Heart right ventricle (tissue), 16 donors: ENCODE measurements at regions of chr1 and their contacts with region 1.

Region 1: DNA sequence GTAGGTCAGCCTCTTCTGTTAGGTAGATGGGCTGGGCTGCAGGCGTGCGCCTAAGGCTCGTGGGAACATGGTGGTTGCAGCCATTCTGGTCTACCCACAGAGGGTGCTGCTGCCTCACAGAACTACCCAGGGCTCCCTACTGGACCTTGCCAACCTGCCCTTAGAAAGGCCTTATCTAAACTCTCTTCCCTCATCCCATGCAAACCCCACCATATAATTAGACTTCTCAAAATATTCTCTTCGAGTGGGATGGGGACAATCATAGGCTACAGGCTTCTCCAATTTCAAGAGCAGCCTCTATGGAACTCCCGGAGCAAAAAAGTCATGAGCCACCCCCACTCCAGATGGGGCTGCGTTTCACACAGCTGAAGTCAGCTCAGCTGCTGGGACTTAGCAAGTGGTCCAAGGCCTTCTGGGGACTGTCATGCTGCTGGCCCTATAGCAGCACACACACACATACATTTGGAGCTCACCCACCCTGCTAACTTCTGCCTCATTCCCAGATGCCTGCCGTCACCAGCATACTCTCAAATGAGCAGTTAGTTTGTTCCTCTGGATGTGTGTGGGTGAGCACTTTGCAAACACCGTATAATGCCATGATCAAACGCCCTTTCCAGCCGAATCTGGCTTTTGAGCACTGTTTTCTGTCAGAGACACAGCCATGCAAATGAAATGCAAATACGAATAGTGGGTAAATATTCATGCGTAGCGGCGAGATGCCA is 6.1 kb upstream of the SDHB start:
- DNase-seq: peak; percentile 43 to 53
- ATAC-seq: peak; percentile 59 to 88 (median 84)
- H3K4me3 ChIP-seq: no peak overlapping the region
- H3K27ac ChIP-seq: peak overlapping the region in 1 of 10 donors; percentile 72
- H3K4me1 ChIP-seq: peaks cover 0 to 48% (median 7%) of the 10 kb centered on the region in 9 donors
- H3K27me3 ChIP-seq: peaks cover 0 to 5% (median 0%) of the 10 kb centered on the region in 7 donors
- CTCF ChIP-seq: peak; percentile 41 to 73 (median 67)

Region 2: DNA sequence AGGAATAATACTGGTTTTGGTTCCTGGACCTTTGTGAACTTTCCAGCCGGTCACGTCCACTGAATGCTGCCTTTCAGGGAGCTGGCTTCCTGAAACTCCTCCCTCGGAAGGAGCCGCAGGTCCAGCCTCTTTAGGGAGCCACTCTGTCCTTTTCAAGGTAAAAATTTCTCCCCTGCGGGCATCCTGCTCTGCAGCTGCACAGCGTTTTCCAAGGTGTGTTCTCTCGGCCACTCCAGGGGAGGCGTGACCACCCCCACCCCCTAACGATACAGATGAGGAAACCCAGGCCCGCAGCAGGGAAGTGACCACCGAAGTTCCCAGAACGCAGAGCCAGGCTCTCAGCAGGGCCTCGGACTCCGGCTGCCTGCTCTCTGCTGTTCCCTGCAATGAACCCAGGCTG is 37.9 kb after region 1 on chr1:
- intact Hi-C with region 1: loop called in 1 of 10 experiments (anchors 2 kb)
- DNase-seq: no peak
- ATAC-seq: peak in 1 of 8 donors; percentile 34
- H3K4me3 ChIP-seq: no peak overlapping the region
- H3K27ac ChIP-seq: peak overlapping the region in 1 of 10 donors; percentile 75
- H3K4me1 ChIP-seq: peaks cover 0 to 16% (median 0%) of the 10 kb centered on the region in 9 donors
- H3K27me3 ChIP-seq: peaks cover 0 to 9% (median 0%) of the 10 kb centered on the region in 7 donors
- CTCF ChIP-seq: no peak

Region 3: DNA sequence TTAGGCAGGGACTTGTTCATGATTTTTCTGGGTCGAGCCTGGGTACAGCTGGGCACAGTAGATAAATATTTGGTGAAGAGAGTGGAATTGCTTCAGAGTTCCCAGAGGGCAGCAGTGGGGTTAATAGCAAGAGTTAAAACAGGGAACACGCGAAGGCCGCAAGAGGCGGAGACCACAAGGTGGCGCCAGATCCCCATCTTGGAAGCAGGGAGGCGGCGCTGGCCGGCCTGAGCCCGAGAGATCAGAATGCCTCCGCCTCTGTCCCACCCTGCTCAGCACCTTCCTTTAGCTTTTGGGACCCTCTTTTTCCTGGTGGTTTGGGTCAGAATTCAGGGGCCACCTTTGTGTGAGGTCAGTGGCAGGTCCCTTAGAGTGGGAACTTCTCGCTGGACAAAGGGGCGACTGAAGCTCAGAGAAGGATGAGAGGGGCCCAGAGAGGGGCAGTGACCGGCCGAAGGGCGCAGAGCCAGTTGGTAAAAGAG is 65.9 kb after region 1 on chr1:
- intact Hi-C with region 1: loop called in 1 of 10 experiments (anchors 10 kb)
- DNase-seq: peak; percentile 84 to 89
- ATAC-seq: peak; percentile 77 to 88 (median 83)
- H3K4me3 ChIP-seq: no peak overlapping the region
- H3K27ac ChIP-seq: no peak overlapping the region
- H3K4me1 ChIP-seq: peaks cover 0 to 43% (median 5%) of the 10 kb centered on the region in 9 donors
- H3K27me3 ChIP-seq: peaks cover 0 to 16% (median 2%) of the 10 kb centered on the region in 7 donors
- CTCF ChIP-seq: peak; percentile 85 to 98 (median 92)

Region 4: DNA sequence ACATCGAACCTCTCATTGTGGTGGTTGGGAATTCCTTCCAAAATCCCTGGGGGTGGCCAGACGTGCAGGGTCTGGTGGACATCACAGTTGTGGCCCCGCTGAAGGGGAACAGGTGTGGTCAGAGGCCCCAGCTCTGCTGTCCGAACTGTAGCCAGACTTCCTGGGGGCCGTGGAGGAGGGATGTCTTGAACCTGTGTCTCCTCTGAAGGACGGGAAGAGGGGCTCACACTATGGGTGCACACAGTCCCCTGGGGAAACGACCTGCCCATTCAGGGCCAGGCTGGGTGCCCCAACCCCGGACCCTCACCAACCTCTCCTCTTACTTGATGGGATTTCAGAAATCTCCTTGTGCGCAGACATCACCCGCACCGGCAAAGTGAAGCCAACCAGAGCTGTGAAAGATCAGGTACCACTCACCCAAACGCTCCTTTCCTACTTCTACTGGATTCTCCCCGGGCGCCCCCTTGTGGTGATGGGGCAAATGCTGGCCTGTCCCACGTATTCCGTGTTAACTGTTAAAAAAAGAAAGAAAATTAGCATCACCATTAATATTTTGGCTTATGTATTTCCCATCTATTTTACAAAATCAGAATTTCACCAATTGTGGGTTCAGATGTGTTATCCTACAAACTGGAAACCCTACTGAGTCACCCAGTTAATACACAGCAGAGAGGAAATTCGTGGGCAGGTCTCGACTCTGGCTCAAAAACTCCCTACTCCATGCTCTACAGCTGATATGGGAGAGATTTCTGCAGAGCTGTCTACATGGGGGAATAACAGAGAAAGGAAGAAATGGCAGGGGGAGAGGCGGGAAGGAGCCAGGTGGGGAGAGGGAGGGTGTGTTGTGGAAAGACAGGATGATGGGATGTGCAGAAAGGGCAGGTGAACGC is 276.2 kb after region 1 on chr1:
- intact Hi-C with region 1: loop called in 4 of 10 experiments (anchors 5 to 10 kb)
- DNase-seq: peak; percentile 40 to 46
- ATAC-seq: peak in 1 of 8 donors; percentile 51
- H3K4me3 ChIP-seq: no peak overlapping the region
- H3K27ac ChIP-seq: no peak overlapping the region
- H3K4me1 ChIP-seq: no peaks in the 10 kb centered on the region
- H3K27me3 ChIP-seq: peaks cover 0 to 46% (median 21%) of the 10 kb centered on the region in 7 donors
- CTCF ChIP-seq: peak; percentile 40 to 90 (median 68)

Region 5: DNA sequence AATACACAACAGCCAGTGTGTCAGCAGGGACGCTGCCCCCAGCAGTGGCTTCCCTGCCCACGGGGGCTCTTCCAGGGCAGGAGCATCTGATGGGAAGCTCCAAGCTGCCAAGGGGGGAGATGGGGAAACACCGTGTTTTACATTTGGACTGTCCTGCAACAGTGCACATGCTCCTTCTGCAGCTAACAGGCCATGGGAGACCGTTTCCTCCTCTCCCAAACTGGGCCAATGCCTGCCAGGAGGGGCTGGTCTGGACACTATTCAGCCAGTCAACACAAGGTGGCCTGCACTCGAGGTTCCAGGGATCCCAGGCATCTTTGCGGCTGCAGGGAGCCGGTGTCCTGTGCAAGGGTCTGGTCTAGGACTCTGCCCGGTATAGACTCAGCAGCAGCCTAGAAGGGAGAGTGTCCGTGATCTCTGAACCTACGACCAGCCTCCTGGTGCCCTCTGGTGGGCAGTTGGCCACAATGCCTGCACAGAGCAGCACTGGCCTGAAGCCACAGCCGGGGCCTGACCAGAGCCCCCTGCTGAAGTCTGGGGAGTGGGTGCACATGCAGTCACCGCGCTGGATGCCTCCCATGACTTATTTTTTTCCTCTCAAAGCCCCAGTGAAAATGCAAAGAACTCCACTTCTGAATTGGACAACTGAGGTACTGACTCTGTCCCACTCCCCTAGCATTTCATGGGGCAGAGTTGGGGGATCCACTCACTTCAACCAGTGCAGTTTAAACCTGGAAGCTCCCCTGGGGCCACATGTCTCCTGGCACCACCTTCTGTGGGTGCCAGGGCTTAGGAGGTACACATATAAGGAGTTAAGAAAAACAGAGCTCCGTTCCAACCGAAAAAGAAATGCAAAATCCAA is 346.2 kb after region 1 on chr1:
- intact Hi-C with region 1: loop called in 2 of 10 experiments (anchors 10 kb)
- DNase-seq: peak; percentile 39 to 50
- ATAC-seq: peak in 7 of 8 donors; percentile 82 to 90 (median 87)
- H3K4me3 ChIP-seq: no peak overlapping the region
- H3K27ac ChIP-seq: no peak overlapping the region
- H3K4me1 ChIP-seq: peaks cover 0 to 10% (median 0%) of the 10 kb centered on the region in 9 donors
- H3K27me3 ChIP-seq: peaks cover 0 to 5% (median 0%) of the 10 kb centered on the region in 7 donors
- CTCF ChIP-seq: peak; percentile 46 to 81 (median 72)